Left cardiac atrium (tissue), 4 donors: ENCODE measurements at regions of chr15 and their contacts with region 1.

Region 1: DNA sequence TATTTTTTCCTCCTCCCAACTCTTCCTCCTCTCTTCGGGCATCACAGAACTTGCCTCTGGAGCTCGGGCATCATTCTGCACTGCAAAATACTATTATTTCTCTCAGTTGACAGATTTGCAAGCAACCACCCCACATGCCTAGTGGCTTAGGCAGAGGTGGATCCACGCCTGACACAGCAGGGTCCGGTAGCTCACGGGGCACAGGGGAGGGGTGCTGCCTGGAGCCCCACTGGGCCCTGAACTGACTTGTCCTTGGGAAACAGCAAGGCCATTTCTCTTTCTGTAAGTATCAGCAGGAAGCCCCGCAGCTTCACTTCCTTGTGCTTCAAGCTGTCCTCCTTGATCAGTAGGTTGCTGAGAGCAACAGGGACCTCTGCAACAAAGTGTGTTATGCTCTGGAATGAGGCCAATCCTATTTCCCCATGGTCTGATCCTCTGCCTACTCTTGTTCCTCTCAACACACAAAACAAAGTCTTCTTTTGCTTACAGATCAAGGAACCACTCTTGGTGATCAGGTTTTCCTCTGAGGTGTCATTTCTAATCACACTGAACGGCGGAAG is 69.1 kb downstream of the FAM174B start:
- DNase-seq: no peak
- ATAC-seq: no peak

Region 2: GRCh38 chr15:92611993-92612745 is 25.7 kb after region 1 on chr15:
- intact Hi-C with region 1: no loop called
- DNase-seq: no peak
- ATAC-seq: no peak

Region 3: DNA sequence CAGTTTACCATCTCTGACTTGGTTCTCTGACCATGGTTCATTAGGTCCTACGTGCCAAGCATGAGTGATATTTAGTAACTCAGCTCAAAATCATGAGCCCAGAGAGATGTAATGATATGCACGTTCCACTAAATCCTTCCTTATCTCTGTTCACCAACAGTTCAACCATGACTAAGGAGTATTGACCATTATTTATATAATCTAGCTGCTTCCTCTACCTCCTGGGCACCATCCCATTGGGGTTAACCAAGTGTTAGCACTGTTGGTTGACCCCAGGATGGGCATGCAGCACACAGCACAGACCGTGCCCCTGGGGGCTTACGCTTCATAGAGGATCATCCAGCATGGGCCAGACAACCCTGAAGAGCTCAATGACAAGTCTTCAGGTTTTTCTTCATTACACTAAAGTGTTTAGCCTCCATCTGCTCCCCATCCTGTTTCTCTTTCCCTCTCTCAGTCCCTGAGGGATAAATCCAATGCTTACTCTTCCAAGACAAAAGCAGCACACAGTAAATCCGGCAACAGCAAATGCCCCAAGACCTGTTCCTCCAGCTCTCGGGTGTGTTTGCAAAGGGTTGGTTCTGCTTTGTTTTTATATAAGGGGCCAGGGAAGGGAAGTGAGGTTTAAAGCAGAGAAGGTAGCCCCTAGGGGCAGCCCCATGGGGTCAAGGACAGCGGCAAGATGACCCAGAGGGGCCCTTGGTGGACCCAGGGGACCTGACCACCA is 58.7 kb after region 1 on chr15:
- intact Hi-C with region 1: loop called in 1 of 2 experiments (anchors 10 kb)
- DNase-seq: no peak
- ATAC-seq: no peak